ENCODE measurements at regions of chr10 and their contacts with region 1.

Region 1: DNA sequence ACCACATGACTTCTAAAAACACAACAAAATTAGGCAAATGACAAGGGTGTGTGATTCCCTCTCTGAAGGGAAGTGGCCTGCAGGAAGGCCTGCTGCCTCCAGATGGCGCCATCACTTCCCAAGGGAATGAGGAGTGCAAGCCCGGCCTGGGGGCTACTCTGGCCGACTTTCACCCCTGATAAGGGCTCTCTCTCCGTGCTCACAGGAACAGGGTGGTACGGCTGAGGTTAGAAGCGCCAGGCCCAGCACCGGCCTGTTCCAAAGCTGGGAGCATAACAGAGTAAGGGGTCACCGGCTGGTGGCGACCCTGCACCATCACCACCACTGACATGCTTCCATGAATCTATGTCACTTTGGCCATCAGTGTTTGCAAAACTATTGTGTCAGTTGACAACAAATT is 13.1 kb downstream of the RBP3 start:
- DNase-seq: peak; percentile 89
- ATAC-seq: peak; percentile 94
- H3K4me3 Mint-ChIP-seq: no peak overlapping the region
- H3K27ac Mint-ChIP-seq: no peak overlapping the region
- H3K4me1 Mint-ChIP-seq: peaks cover 26% of the 10 kb centered on the region
- H3K27me3 Mint-ChIP-seq: no peaks in the 10 kb centered on the region
- CTCF ChIP-seq: peak; percentile 84

Region 2: DNA sequence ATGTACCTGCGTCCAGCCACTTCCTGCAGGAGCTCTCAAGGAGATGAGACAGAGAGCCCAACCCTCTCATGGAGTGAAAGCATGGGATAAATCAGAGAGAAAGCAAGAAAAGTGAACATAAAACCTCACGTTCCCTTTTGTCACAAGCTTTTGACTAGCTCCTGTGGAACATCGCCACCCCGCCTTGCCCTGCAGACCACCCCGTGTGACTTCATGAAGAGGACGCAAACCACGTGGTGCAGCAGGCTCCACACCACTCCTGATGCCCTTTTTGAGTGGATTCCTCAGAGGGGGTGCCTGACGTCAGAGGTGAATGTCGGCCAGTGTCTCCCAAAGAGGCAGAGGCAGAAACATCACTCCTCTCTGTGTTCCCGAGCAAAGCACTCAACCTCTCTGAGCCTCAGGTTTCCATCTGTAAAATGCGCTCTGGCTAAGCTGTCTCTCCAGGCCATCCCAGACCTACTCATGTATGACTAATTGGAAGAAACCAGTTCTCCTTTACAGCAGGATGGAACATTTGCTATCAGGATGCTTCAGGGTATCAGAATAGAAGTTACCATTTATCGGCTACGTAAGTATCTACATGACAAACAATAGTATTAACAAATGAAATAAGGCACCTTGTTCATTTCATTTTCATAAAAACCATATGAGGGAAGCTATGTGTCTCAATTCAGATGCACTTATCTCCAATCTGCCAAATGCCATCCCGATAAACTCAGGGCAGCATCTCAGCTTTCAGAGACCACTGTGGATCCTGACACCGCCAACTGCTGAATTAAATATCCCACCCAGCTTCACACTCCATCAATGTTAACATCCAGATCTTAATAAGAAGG is 17.5 kb after region 1 on chr10:
- CTCF ChIA-PET with region 1: interaction called, 17 read pairs
- POLR2A ChIA-PET with region 1: interaction called, 7 read pairs
- DNase-seq: no peak
- ATAC-seq: no peak
- H3K4me3 Mint-ChIP-seq: no peak overlapping the region
- H3K27ac Mint-ChIP-seq: no peak overlapping the region
- H3K4me1 Mint-ChIP-seq: peaks cover 35% of the 10 kb centered on the region
- H3K27me3 Mint-ChIP-seq: no peaks in the 10 kb centered on the region; the same call in 1 of the 2 replicates
- CTCF ChIP-seq: no peak

Region 3: DNA sequence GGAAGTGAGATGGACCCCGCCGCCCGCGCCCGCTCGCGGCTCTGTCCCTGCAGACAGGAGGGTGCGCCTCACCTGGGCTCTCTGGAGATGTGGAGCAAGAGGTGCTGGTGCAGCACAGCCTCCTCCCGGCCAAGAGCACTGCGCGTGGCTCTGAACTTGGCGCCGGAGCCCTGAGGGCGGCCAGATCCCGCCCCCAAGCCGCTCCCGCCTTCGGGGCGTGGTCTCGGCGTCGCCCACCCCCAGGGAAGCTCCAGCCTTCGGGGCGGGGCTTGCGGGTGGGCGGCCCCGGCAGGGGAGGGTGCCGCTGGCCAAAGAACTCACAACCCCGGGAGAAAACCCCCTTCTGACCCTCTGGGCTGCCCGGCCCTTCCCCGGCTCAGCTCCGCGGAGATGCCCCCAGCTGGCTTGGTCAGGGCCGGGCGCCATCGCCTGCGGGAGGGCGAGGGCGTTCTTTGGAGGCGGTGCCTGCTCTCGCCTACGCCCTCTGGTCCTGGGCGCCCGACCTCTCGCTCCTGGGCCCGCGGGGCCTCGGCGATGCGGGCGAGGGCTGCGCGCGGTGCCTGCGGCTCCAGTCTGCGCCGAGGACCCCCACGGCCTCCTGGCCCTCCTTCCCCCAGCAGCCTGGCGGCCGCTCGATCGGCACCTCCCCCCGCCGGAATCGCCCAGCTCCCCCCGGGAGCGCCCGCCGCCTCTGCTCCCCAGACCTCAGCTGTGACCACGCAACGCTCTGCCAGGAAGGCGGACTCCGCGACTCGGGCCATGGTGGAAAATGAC is 23.0 kb after region 1 on chr10 and contains the start of gene ZNF488:
- CTCF ChIA-PET with region 1: interaction called, 17 read pairs
- POLR2A ChIA-PET with region 1: interaction called, 7 read pairs
- DNase-seq: peak; percentile 83
- ATAC-seq: peak; percentile 89
- H3K4me3 Mint-ChIP-seq: peak within 1 kb of the TSS; percentile 89
- H3K27ac Mint-ChIP-seq: peak within 1 kb of the TSS; percentile 82
- H3K4me1 Mint-ChIP-seq: peaks cover 32% of the 10 kb centered on the region
- H3K27me3 Mint-ChIP-seq: peaks cover 15% of the 10 kb centered on the region
- CTCF ChIP-seq: no peak
- total RNA-seq, gene ZNF488: 7.1 to 8.7 TPM (median 8.0 TPM) in 3 replicates

Region 4: DNA sequence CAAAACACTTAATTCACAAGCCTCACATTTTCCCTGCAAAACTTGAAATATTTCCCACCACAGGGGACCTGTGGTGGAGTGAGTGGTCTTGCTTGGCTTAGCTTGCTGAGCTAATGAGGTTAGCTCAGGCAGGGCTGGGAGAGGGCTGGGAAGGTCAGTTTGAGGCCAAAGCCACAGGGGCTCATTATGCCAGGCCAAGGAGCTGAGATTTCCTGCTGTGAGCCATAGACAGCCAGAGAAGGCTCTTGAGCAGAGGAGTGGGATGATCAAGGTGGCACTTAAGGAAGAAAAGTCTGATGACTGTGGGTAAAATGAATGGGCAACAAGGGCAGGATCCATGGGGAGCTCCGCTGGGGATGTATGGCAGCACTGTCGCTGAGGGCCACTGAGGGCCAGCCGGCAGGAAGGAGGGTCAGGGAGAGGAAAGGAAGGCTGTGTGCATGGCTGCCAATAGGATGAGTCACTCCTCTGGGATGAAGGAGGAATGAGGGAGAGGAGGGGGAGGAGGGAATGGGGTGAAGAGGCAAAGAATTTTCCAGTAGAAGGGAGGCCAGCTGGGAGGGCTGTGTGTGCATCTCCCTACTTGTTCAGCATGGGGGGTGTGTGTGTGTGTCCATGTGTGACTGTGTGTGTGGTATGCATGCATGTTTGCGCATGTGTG is 41.5 kb after region 1 on chr10:
- CTCF ChIA-PET with region 1: interaction called, 12 read pairs
- POLR2A ChIA-PET with region 1: no interaction called
- DNase-seq: peak; percentile 38
- ATAC-seq: peak; percentile 82
- H3K4me3 Mint-ChIP-seq: no peak overlapping the region
- H3K27ac Mint-ChIP-seq: no peak overlapping the region
- H3K4me1 Mint-ChIP-seq: peaks cover 32% of the 10 kb centered on the region
- H3K27me3 Mint-ChIP-seq: peaks cover 3% of the 10 kb centered on the region; the same call in 1 of the 2 replicates
- CTCF ChIP-seq: no peak